AG04450 (cell line): ENCODE measurements at regions of chr11 and their contacts with region 1.

Region 1: GRCh38 chr11:72585762-72586311 is 88.4 kb downstream of the PDE2A start:
- DNase-seq: peak; percentile 10
- H3K4me3 ChIP-seq: no peak overlapping the region
- H3K27ac ChIP-seq: no peak overlapping the region
- H3K27me3 ChIP-seq: peaks cover 74% of the 10 kb centered on the region
- CTCF ChIP-seq: peak; percentile 84

Region 2: DNA sequence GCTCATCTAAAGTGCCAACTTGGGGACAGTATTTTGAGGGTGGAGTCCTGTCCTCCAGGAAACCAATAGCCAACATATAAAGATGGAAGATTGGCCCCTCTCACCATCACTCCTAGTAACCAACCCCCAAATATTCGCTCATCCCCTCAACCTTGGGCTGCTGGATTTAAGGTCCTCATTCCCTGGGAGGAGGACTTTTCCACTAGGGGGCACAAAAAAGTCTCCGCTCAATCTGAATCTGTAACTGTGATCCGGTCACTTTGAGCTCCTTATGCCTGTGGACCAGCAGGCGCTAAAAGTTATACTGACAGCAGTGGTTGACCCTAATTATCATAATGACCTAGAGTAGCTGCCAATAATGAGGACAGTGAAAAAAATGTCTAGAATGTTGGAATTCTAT is 131.0 kb before region 1 on chr11:
- CTCF ChIA-PET with region 1: no interaction called
- POLR2A ChIA-PET with region 1: no interaction called
- DNase-seq: no peak
- H3K4me3 ChIP-seq: no peak overlapping the region
- H3K27ac ChIP-seq: no peak overlapping the region
- H3K27me3 ChIP-seq: peaks cover 28% of the 10 kb centered on the region
- CTCF ChIP-seq: peak; percentile 32

Region 3: GRCh38 chr11:72507050-72507449 is 78.8 kb before region 1 on chr11:
- CTCF ChIA-PET with region 1: no interaction called
- POLR2A ChIA-PET with region 1: no interaction called
- DNase-seq: no peak
- H3K4me3 ChIP-seq: no peak overlapping the region
- H3K27ac ChIP-seq: no peak overlapping the region
- H3K27me3 ChIP-seq: peaks cover 4% of the 10 kb centered on the region
- CTCF ChIP-seq: no peak

Region 4: GRCh38 chr11:72573072-72573854 is 12.6 kb before region 1 on chr11:
- CTCF ChIA-PET with region 1: interaction called, 10 read pairs
- POLR2A ChIA-PET with region 1: no interaction called
- DNase-seq: no peak
- H3K4me3 ChIP-seq: no peak overlapping the region
- H3K27ac ChIP-seq: no peak overlapping the region
- H3K27me3 ChIP-seq: peaks cover 6% of the 10 kb centered on the region
- CTCF ChIP-seq: peak; percentile 59

Region 5: DNA sequence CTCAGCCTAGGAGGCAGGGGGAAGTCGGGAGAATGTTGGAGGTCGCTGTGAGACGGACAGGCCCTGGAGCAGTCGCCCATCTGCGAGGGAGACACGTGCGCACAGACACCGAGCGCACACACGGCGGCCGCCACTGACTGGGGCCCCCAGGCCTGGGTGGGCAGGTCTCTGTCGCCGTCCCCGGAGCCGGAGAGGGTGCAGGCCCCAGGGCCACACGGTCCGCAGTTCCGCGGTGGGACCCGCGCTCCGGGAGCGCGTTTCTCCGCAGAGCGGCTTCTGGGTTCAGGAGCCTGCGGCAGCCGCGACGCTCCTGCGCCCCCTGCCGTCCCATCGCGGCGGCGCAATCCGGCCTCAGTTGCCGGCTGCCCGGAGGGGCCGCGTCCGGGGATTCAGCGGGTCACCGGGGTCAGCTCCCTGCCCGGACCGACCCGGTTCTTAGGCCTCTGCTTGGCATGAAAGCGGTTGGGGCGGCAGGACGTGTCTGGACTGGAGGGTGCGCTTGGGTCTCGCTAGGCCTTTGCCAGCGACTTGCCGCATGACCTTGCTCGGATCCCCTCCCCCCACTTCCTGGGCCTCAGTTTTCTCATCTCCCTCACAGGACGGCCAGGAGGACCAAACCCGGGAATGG is 57.2 kb after region 1 on chr11:
- CTCF ChIA-PET with region 1: interaction called, 16 read pairs
- POLR2A ChIA-PET with region 1: no interaction called
- DNase-seq: no peak
- H3K4me3 ChIP-seq: peak overlapping the region; percentile 51; the same call in 1 of the 2 replicates
- H3K27ac ChIP-seq: no peak overlapping the region
- H3K27me3 ChIP-seq: peaks cover 44% of the 10 kb centered on the region
- CTCF ChIP-seq: peak; percentile 76

Region 6: GRCh38 chr11:72722050-72722748 is 136.4 kb after region 1 on chr11:
- CTCF ChIA-PET with region 1: no interaction called
- POLR2A ChIA-PET with region 1: no interaction called
- DNase-seq: peak; percentile 65
- H3K4me3 ChIP-seq: peak overlapping the region; percentile 80
- H3K27ac ChIP-seq: peak overlapping the region; percentile 78
- H3K27me3 ChIP-seq: no peaks in the 10 kb centered on the region
- CTCF ChIP-seq: no peak